ENCODE measurements at regions of chr7 and their contacts with region 1.

Region 1: GRCh38 chr7:104156842-104157277 is 51.0 kb downstream of the ORC5 start:
- DNase-seq: peak in 1 of 2 experiments; percentile 55
- H3K4me3 ChIP-seq: no peak overlapping the region
- H3K4me1 ChIP-seq: peaks cover 5% of the 10 kb centered on the region; the same call in 1 of the 2 replicates
- H3K27me3 ChIP-seq: no peaks in the 10 kb centered on the region

Region 2: GRCh38 chr7:103573479-103574058 is 583.3 kb before region 1 on chr7:
- in situ Hi-C with region 1: loop called (anchors 25 kb)
- DNase-seq: no peak
- H3K4me3 ChIP-seq: no peak overlapping the region
- H3K4me1 ChIP-seq: peaks cover 30% of the 10 kb centered on the region
- H3K27me3 ChIP-seq: no peaks in the 10 kb centered on the region

Region 3: DNA sequence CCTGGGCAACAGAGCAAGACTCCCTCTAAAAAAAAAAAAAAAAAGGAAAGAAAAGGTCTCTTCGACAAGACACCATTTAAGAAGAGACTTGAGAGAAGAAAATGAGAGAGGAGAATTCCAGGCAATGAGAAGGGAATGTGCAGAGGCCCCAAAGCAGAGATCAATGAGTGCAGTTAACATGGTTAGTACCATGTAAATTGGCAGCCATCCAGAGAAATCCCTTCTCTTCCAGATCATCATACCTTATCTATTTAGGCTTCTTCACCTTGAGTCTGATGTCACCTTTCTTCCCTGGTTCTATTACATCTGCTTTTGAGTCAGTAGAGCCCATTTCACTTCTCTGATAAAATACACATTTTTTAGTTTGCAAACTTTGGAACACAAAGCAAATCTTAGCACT is 194.2 kb after region 1 on chr7:
- in situ Hi-C with region 1: no loop called
- DNase-seq: no peak
- H3K4me3 ChIP-seq: no peak overlapping the region
- H3K4me1 ChIP-seq: no peaks in the 10 kb centered on the region
- H3K27me3 ChIP-seq: peaks cover 9% of the 10 kb centered on the region; the same call in 1 of the 2 replicates